ENCODE measurements at regions of chr1 and their contacts with region 1.

Region 1: DNA sequence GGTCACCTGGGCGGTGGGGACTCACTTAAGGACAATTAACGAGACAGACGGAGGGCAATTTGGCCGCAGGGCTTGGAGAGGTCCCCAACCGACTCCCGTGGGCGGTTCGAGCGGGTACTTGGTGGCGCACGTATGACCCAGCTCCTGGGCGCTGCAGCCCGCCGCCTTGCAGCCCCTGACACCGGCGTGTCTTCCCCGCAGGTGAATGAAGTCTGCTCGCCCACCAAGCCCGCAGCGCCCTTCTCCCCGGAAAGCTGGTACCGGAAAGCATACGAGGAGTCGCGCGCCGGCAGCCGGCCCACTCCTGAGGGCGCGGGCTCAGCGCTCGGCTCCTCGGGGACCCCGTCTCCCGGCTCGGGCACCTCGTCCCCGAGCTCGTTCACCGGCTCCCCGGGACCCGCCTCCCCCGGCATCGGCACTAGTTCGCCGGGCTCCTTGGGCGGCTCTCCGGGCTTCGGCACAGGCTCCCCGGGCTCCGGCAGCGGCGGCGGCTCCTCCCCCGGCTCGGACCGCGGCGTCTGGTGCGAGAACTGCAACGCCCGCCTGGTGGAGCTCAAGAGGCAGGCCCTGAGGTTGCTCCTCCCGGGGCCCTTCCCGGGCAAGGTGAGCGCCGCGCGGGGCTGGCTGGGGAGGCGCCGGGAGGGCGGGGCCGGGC is 1.4 kb downstream of the KIF26B start:
- DNase-seq: peak; percentile 41 to 82 (median 70)
- ATAC-seq: peak; percentile 82
- H3K4me3 ChIP-seq: peak overlapping the region; percentile 43 to 60
- H3K4me3 Mint-ChIP-seq: peak overlapping the region; percentile 79
- H3K27ac ChIP-seq: no peak overlapping the region
- H3K27ac Mint-ChIP-seq: no peak overlapping the region
- H3K4me1 ChIP-seq: peaks cover 32% of the 10 kb centered on the region
- H3K4me1 Mint-ChIP-seq: peaks cover 25% of the 10 kb centered on the region
- H3K27me3 ChIP-seq: peaks cover 30 to 31% of the 10 kb centered on the region in 2 experiments
- H3K27me3 Mint-ChIP-seq: peaks cover 50% of the 10 kb centered on the region
- CTCF ChIP-seq: peak; percentile 28

Region 2: DNA sequence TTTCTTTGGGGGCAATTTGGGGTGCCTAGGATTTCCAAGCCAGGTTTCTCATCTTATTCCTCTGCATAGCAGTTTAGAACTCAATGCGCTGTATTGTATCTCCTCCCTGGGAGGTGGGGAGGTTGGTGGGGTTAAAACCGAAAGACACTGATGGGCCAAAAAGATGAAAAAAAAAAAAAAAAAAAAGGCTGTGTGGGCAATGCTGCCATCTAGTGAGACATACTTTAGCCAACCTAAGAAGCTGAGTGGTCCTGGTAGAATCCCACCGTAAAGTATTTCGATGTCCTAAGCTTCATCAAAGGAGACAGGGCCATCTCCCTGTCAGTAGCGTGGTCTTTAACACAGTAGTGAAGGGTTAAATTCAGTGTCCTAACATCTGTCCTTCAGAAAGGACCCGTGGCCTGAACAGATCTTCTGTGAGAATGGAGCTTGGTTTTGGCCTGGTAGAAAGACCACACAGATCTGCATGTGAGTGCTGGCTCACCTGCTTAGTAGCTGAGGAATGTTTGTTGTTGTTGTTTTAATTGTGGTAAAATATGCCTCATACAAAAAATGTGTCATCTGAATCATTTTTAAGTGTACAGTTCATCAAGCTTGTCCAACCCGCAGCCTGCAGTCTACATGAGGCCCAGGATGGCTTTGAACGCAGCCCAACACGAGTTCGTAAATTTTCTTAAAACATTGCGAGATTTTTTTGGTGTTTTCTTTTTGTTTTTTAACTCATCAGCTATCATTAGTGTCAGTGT is 224.8 kb after region 1 on chr1:
- CTCF ChIA-PET with region 1: interaction called, 5 read pairs
- POLR2A ChIA-PET with region 1: no interaction called
- intact Hi-C with region 1: loop called (anchors 1 to 2 kb)
- DNase-seq: peak in 1 of 9 experiments; percentile 55
- ATAC-seq: no peak
- H3K4me3 ChIP-seq: no peak overlapping the region
- H3K4me3 Mint-ChIP-seq: no peak overlapping the region
- H3K27ac ChIP-seq: no peak overlapping the region
- H3K27ac Mint-ChIP-seq: no peak overlapping the region
- H3K4me1 ChIP-seq: peaks cover 13% of the 10 kb centered on the region
- H3K4me1 Mint-ChIP-seq: peaks cover 24% of the 10 kb centered on the region
- H3K27me3 ChIP-seq: no peaks in the 10 kb centered on the region
- H3K27me3 Mint-ChIP-seq: no peaks in the 10 kb centered on the region
- CTCF ChIP-seq: no peak

Region 3: GRCh38 chr1:246117066-246117791 is 961.0 kb after region 1 on chr1:
- CTCF ChIA-PET with region 1: interaction called, 4 read pairs
- POLR2A ChIA-PET with region 1: no interaction called
- intact Hi-C with region 1: loop called (anchors 2 to 5 kb)
- DNase-seq: peak; percentile 9 to 77 (median 42)
- ATAC-seq: peak; percentile 91
- H3K4me3 ChIP-seq: no peak overlapping the region
- H3K4me3 Mint-ChIP-seq: peak overlapping the region; percentile 56
- H3K27ac ChIP-seq: peak overlapping the region in 1 of 2 experiments; percentile 41
- H3K27ac Mint-ChIP-seq: peak overlapping the region; percentile 82
- H3K4me1 ChIP-seq: peaks cover 14% of the 10 kb centered on the region
- H3K4me1 Mint-ChIP-seq: peaks cover 32% of the 10 kb centered on the region
- H3K27me3 ChIP-seq: no peaks in the 10 kb centered on the region
- H3K27me3 Mint-ChIP-seq: no peaks in the 10 kb centered on the region
- CTCF ChIP-seq: peak; percentile 52

Region 4: GRCh38 chr1:246497331-246497915 is 1341.2 kb after region 1 on chr1:
- CTCF ChIA-PET with region 1: interaction called, 10 read pairs
- POLR2A ChIA-PET with region 1: no interaction called
- intact Hi-C with region 1: loop called in 1 of 2 experiments (anchors 2 kb)
- DNase-seq: peak in 3 of 9 experiments; percentile 28 to 84 (median 76)
- ATAC-seq: peak; percentile 69
- H3K4me3 ChIP-seq: no peak overlapping the region
- H3K4me3 Mint-ChIP-seq: no peak overlapping the region
- H3K27ac ChIP-seq: no peak overlapping the region
- H3K27ac Mint-ChIP-seq: no peak overlapping the region
- H3K4me1 ChIP-seq: peaks cover 6% of the 10 kb centered on the region
- H3K4me1 Mint-ChIP-seq: peaks cover 13% of the 10 kb centered on the region
- H3K27me3 ChIP-seq: no peaks in the 10 kb centered on the region
- H3K27me3 Mint-ChIP-seq: no peaks in the 10 kb centered on the region
- CTCF ChIP-seq: peak; percentile 69

Region 5: GRCh38 chr1:246753670-246754535 is 1597.7 kb after region 1 on chr1:
- CTCF ChIA-PET with region 1: no interaction called
- POLR2A ChIA-PET with region 1: no interaction called
- intact Hi-C with region 1: loop called in 1 of 2 experiments (anchors 2 kb)
- DNase-seq: peak; percentile 36 to 75 (median 62)
- ATAC-seq: peak; percentile 82
- H3K4me3 ChIP-seq: no peak overlapping the region
- H3K4me3 Mint-ChIP-seq: no peak overlapping the region
- H3K27ac ChIP-seq: no peak overlapping the region
- H3K27ac Mint-ChIP-seq: no peak overlapping the region
- H3K4me1 ChIP-seq: no peaks in the 10 kb centered on the region
- H3K4me1 Mint-ChIP-seq: no peaks in the 10 kb centered on the region
- H3K27me3 ChIP-seq: no peaks in the 10 kb centered on the region
- H3K27me3 Mint-ChIP-seq: no peaks in the 10 kb centered on the region
- CTCF ChIP-seq: peak; percentile 61